Sciatic nerve (tissue), 2 donors: ENCODE measurements at regions of chr7 and their contacts with region 1.

Region 1: GRCh38 chr7:105346593-105347322 is 42.0 kb downstream of the SRPK2 start:
- DNase-seq: no peak
- ATAC-seq: no peak

Region 2: DNA sequence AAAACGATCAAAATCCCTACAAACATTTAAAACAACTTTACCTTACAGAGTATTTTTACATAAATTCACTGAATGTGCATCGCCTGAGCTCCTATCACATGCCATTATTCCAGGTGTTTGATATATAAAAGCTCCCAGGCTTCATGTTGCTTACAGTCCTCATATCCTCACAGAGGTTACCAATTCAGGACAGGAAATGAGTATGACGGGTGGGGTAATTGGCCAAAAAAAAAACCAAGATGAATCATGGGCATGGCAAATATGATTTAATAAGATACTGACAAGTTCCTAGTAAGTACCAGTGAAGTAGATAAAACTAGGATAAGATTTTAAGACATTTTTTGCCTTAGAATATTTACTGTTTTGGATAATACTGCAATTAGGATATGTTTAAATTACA is 196.9 kb before region 1 on chr7:
- intact Hi-C with region 1: loop called (anchors 10 kb)
- DNase-seq: no peak
- ATAC-seq: no peak

Region 3: GRCh38 chr7:105304040-105304895 is 42.5 kb before region 1 on chr7:
- intact Hi-C with region 1: no loop called
- DNase-seq: no peak
- ATAC-seq: peak; percentile 83